ENCODE measurements at regions of chr9 and their contacts with region 1.

Region 1: DNA sequence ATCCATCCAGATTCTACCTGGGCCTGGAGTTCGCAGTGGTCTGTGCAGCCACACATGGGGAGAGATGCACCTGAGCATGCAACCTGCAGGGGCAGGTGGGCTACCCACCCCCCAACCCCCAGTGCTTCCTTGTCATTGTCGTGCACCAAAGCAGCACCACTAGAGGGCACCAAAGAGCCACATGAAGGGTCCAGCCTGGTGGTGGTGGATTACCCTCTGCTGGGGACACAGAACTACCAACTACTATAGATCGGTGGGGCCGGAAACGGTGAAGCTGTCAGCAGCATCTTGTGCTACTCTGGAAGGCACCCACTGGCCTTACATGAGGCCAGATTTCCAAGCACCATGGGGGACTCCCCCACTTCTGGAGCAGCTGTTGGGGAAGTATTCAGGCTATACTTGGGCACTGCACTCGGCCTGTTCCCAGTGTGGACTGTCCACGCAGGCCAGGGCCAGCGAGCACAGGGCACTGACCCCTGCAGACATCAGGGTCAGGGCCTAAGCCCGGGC is 60.2 kb upstream of the TBC1D2 start:
- DNase-seq: peak; percentile 61
- ATAC-seq: peak; percentile 95
- H3K4me3 Mint-ChIP-seq: no peak overlapping the region
- H3K27ac Mint-ChIP-seq: no peak overlapping the region
- H3K4me1 Mint-ChIP-seq: peaks cover 2% of the 10 kb centered on the region
- H3K27me3 Mint-ChIP-seq: no peaks in the 10 kb centered on the region
- CTCF ChIP-seq: no peak

Region 2: GRCh38 chr9:98074115-98074990 is 241.3 kb before region 1 on chr9:
- CTCF ChIA-PET with region 1: no interaction called
- POLR2A ChIA-PET with region 1: no interaction called
- intact Hi-C with region 1: loop called (anchors 1 kb)
- DNase-seq: peak; percentile 58
- ATAC-seq: peak; percentile 61
- H3K4me3 Mint-ChIP-seq: no peak overlapping the region
- H3K27ac Mint-ChIP-seq: peak overlapping the region; percentile 24
- H3K4me1 Mint-ChIP-seq: peaks cover 6% of the 10 kb centered on the region
- H3K27me3 Mint-ChIP-seq: no peaks in the 10 kb centered on the region
- CTCF ChIP-seq: peak; percentile 91

Region 3: DNA sequence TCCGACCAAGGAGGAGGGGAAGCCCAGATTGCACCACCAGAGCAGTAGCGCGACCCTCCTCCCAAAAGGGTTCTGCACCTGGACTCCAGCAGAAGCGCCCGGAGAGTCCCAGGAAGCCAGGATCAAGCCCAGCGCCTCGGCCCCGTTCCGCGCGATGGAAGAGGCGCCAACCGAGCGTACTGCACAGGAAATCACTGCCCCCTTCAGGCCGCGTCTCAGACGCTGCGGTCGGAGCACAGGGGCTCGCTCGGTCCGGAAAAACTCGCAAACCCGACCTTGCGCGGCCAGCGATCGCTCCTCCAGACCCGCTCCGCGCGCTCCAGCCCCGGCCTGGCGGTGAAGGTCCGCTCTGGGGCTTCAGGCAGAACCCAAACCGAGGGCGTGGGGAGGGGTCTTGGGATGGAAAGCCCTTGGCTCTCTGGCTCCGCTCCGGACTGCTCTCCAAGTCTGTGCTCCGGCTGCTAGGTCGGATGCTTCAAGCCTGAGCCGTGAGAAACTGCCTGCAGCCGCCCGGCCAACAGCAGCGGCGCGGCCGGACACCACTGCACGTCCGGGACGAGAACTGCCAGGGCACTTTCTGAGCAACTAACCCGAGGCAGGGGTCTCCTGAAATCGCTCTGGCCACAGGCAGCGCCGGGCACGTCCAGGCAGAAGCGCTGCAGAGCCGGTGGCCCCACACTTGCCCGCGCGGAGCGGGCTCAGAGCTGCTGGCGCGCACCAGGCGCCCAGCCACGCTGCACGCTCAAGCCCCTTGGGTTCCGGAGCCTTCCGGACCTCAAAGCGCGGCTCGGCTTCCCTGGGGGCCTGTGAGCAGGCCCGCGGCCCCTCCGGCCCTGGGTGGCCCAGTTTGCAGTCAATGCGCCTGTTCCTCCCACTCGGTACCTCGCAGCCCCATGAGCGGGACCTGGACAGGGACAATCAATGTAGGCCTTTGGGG is 391.8 kb after region 1 on chr9:
- CTCF ChIA-PET with region 1: no interaction called
- POLR2A ChIA-PET with region 1: no interaction called
- intact Hi-C with region 1: loop called (anchors 5 kb)
- DNase-seq: no peak
- ATAC-seq: no peak
- H3K4me3 Mint-ChIP-seq: no peak overlapping the region
- H3K27ac Mint-ChIP-seq: no peak overlapping the region
- H3K4me1 Mint-ChIP-seq: peaks cover 12% of the 10 kb centered on the region
- H3K27me3 Mint-ChIP-seq: peaks cover 57% of the 10 kb centered on the region
- CTCF ChIP-seq: no peak

Region 4: GRCh38 chr9:98775831-98776441 is 460.3 kb after region 1 on chr9:
- CTCF ChIA-PET with region 1: interaction called, 76 read pairs
- POLR2A ChIA-PET with region 1: interaction called, 3 read pairs
- intact Hi-C with region 1: loop called (anchors 1 kb)
- DNase-seq: no peak
- ATAC-seq: peak; percentile 42
- H3K4me3 Mint-ChIP-seq: no peak overlapping the region
- H3K27ac Mint-ChIP-seq: no peak overlapping the region
- H3K4me1 Mint-ChIP-seq: no peaks in the 10 kb centered on the region
- H3K27me3 Mint-ChIP-seq: no peaks in the 10 kb centered on the region
- CTCF ChIP-seq: no peak

Region 5: DNA sequence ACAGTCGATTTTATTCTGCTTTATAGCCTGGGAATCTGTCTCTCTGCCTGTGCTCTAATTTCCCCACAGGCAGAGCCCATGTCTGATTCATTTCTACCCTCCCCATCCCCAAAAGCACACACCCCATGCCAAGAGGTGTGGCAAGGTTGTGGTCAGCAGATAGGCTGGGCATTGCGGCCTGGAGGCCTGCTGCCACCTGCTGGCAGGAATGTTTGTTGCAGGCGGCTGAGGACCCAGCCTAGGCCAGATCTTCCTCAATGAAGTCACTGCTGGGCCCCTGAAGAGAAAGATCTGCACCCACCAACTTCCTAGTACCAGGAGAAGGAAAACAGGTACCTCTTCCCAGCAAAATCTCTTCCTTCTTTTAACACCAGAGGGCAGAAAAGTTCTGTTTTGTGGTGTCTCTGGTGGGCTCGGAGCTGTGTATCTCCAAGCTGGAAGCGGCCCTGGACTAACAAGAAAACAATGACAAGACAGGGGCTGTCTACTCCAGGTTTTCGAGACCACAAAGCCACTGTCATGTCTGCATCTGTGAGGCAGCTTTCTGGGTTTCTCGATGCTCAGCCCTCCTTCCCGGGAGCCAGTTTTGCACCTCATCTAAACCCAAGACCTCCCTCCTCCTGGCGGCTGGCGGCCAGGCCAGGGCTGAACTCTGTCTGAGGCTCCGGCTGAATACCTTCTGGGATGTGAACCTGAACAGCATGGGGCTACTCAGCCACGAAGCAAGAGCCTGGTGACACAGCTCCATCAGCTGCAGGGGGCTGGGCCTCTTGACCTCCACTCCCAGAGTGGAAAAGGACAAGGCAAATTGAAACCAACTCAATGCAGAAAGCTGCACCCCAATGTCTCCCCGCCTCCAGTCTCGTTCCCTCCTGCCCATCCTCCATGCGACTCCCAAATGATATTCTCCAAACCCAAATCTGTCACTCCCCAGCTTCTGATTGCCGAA is 475.8 kb after region 1 on chr9:
- CTCF ChIA-PET with region 1: interaction called, 14 read pairs
- POLR2A ChIA-PET with region 1: no interaction called
- intact Hi-C with region 1: loop called (anchors 1 kb)
- DNase-seq: peak; percentile 60
- ATAC-seq: peak; percentile 72
- H3K4me3 Mint-ChIP-seq: no peak overlapping the region
- H3K27ac Mint-ChIP-seq: no peak overlapping the region
- H3K4me1 Mint-ChIP-seq: peaks cover 12% of the 10 kb centered on the region
- H3K27me3 Mint-ChIP-seq: no peaks in the 10 kb centered on the region
- CTCF ChIP-seq: peak; percentile 20

Region 6: GRCh38 chr9:98944057-98944733 is 628.6 kb after region 1 on chr9:
- CTCF ChIA-PET with region 1: no interaction called
- POLR2A ChIA-PET with region 1: no interaction called
- intact Hi-C with region 1: no loop called
- DNase-seq: no peak
- ATAC-seq: no peak
- H3K4me3 Mint-ChIP-seq: peak overlapping the region; percentile 56
- H3K27ac Mint-ChIP-seq: no peak overlapping the region
- H3K4me1 Mint-ChIP-seq: peaks cover 15% of the 10 kb centered on the region
- H3K27me3 Mint-ChIP-seq: peaks cover 65% of the 10 kb centered on the region
- CTCF ChIP-seq: no peak